ENCODE measurements at regions of chr7 and their contacts with region 1.

Region 1: DNA sequence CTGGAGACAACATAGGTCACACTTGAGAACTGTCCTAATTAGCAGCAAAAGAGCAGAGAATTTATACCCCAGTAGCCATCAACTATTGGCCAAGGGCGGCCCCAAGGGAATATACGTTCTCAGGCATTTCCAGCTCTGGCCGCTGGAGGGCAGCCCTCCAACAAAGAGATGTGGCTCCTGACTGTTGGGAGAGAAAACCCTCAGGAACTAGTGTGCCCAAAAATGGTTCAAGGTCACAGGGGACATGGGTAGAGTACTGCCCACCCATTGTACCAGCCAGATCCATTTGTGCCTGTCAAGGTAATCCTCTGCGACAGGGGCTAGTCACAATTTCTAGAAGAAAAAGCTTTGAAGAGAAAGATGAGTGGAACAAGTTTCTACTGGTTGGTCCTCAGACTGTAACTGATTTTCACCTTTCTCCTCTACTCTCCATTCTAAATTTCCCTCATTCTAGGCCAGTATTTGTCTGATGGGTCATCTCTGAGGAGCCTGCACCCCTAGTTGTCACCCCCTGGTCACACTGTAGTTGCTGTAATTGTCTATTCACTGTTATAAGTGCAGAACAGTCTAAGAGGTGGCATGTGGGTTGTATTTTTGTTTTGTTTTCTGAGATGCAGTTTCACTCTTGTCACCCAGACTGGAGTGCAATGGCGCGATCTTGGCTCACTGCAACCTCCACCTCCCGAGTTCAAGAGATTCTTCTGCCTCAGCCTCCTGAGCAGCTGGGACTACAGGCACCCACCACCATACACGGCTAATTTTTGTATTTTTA is 14.7 kb upstream of the C7orf33 start:
- DNase-seq: peak; percentile 58 to 71
- ATAC-seq: peak; percentile 65 to 87 (median 73)
- H3K4me3 ChIP-seq: no peak overlapping the region
- H3K27ac ChIP-seq: no peak overlapping the region
- H3K4me1 ChIP-seq: no peaks in the 10 kb centered on the region
- H3K27me3 ChIP-seq: no peaks in the 10 kb centered on the region
- CTCF ChIP-seq: peak; percentile 84

Region 2: DNA sequence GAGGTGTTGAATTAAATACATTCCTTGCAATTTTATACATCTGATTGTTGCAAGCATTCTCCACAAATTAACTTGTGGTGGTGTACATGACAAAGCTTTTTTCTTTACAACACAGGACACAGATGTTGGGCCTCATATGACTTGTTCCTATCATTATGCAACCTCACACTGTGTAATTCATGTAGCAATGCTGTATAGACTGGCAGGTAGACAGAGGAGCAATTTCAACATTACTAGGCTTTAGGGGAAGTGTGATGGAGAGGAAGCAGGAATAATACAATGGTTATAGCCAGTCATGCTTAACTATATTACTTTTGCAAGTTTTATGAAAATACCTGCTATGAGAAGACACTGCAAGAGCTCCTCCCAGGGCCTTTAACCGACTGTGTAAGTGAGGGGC is 1627.1 kb before region 1 on chr7:
- intact Hi-C with region 1: no loop called
- DNase-seq: no peak
- ATAC-seq: no peak
- H3K4me3 ChIP-seq: no peak overlapping the region
- H3K27ac ChIP-seq: no peak overlapping the region
- H3K4me1 ChIP-seq: no peaks in the 10 kb centered on the region
- H3K27me3 ChIP-seq: no peaks in the 10 kb centered on the region
- CTCF ChIP-seq: no peak

Region 3: DNA sequence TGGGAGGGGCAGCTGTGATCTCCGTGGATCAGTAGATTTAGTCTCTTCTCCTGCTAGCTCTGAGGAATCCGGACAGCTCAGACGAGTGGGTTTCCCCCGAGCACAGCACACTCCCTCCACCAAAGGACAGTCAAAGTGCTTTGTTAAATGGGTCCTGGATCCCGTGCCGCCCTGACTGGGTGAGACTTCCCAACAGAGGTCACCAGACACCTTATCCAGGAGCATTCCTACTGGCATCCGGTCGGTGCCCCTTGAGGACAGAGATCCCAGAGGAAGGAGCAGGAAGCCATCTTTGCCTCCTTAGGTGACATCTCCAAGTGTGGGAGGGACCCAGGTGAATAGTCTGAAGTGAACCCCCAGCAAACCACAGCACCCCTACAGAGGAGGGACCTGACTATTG is 1310.3 kb before region 1 on chr7:
- intact Hi-C with region 1: no loop called
- DNase-seq: no peak
- ATAC-seq: no peak
- H3K4me3 ChIP-seq: no peak overlapping the region
- H3K27ac ChIP-seq: no peak overlapping the region
- H3K4me1 ChIP-seq: no peaks in the 10 kb centered on the region
- H3K27me3 ChIP-seq: no peaks in the 10 kb centered on the region
- CTCF ChIP-seq: no peak

Region 4: GRCh38 chr7:148367731-148368475 is 207.9 kb before region 1 on chr7:
- intact Hi-C with region 1: no loop called
- DNase-seq: no peak
- ATAC-seq: no peak
- H3K4me3 ChIP-seq: no peak overlapping the region
- H3K27ac ChIP-seq: no peak overlapping the region
- H3K4me1 ChIP-seq: no peaks in the 10 kb centered on the region
- H3K27me3 ChIP-seq: peaks cover 0 to 2% (median 0%) of the 10 kb centered on the region in 3 donors
- CTCF ChIP-seq: no peak

Region 5: DNA sequence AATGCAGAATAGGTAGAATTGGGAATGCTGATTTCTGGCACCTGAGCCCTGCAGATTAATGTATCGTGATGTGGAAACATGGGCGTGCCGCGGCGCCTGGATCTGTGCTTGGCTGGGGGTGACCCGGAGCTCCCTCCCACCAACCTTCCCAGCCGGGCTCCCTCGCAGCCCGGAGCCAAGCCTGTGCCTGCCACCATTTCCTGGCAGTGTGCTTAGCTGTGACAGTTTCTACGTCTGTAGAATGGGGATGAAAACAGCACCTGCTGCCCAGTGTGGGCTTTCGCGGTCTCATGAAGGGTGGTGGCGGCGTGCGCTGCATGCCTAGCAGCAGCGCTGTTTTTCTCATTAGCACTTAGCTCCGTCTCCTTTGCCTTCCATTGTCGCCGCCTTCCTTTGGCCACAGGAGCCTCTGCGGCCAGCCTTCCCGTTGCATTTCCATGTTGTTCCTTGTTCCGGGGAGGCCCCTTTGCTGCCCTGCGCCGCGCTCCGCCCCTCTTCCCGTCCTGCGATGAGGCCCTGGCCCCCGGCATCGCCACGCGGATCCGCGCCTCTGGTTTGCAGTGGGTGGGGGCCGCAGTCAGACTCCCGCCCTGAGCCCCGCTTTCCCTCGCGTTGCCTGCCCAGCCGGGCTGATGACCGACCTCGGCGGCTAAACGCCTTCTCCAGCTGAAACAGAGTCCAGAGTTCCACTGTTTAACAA is 207.1 kb after region 1 on chr7:
- intact Hi-C with region 1: loop called in 1 of 2 experiments (anchors 10 kb)
- DNase-seq: no peak
- ATAC-seq: no peak
- H3K4me3 ChIP-seq: no peak overlapping the region
- H3K27ac ChIP-seq: no peak overlapping the region
- H3K4me1 ChIP-seq: no peaks in the 10 kb centered on the region
- H3K27me3 ChIP-seq: no peaks in the 10 kb centered on the region
- CTCF ChIP-seq: no peak

Region 6: DNA sequence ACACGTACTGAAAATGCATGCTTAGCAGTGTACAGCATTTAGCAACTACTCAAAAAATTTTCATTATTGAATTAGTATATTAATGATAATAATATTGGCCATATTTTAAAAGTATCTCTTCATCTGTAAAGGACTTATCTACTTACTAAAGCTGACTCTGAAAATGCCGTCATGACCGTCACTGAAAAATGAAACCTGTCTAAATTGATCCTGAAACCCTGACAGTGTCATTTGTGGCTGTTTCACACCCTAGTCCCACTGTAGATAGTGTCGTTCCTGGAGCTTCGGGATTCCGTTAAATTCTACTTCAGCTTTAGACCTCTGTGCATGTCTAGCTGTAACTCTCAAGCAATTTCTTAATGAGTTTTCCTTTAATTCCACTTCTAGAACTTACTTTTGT is 344.0 kb after region 1 on chr7:
- intact Hi-C with region 1: no loop called
- DNase-seq: no peak
- ATAC-seq: no peak
- H3K4me3 ChIP-seq: no peak overlapping the region
- H3K27ac ChIP-seq: no peak overlapping the region
- H3K4me1 ChIP-seq: no peaks in the 10 kb centered on the region
- H3K27me3 ChIP-seq: no peaks in the 10 kb centered on the region
- CTCF ChIP-seq: no peak

Region 7: GRCh38 chr7:148954766-148955165 is 378.9 kb after region 1 on chr7:
- intact Hi-C with region 1: loop called in 1 of 2 experiments (anchors 5 kb)
- DNase-seq: no peak
- ATAC-seq: no peak
- H3K4me3 ChIP-seq: no peak overlapping the region
- H3K27ac ChIP-seq: no peak overlapping the region
- H3K4me1 ChIP-seq: no peaks in the 10 kb centered on the region
- H3K27me3 ChIP-seq: no peaks in the 10 kb centered on the region
- CTCF ChIP-seq: no peak